Activated T-helper 2 cell treated with anti-CD3 and anti-CD28 coated beads, Interferon-gamma antibody, Interleukin-2, Interleukin-4, amounts not matched to agents 10 μg/mL and 5 μg/mL and 100 μg/mL, durations not matched to agents 14 hours and 24 hours and 36 hours (primary cell): ENCODE measurements at regions of chr2 and their contacts with region 1.

Region 1: GRCh38 chr2:54899576-54900200 is 150.6 kb downstream of the RTN4 start:
- DNase-seq: no peak
- H3K4me3 Mint-ChIP-seq: no peak overlapping the region
- H3K27ac Mint-ChIP-seq: no peak overlapping the region
- H3K4me1 Mint-ChIP-seq: peaks cover 18% of the 10 kb centered on the region
- H3K27me3 Mint-ChIP-seq: no peaks in the 10 kb centered on the region

Region 2: DNA sequence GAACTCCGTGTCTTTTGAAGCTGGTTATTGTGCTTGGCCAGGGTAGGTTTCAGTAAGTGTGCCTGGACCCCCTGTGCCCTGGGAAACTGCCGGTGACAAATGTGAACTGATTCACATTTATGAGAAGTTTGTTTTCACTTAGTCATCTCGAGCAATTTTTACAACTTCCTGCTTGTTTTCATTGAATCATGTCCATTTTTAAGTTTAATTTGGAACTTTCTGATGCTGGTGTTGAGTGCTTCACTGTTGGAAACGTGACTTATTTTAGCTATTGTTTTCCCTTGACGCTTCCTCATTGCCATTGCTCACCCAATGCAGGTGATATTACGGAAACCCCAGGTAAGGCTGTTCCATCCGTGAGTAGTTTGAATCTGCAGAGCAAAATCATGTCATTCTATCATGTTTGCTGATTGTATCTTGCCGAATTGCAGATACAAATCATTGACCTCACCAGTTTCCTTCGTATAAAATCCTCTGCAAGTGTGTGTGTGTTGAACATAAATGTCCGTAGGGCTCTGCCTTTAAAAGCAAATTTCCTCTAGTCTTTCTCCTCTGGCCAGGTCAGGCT is 53.4 kb after region 1 on chr2:
- intact Hi-C with region 1: loop called (anchors 5 kb)
- DNase-seq: no peak
- H3K4me3 Mint-ChIP-seq: no peak overlapping the region
- H3K27ac Mint-ChIP-seq: peak overlapping the region; percentile 54
- H3K4me1 Mint-ChIP-seq: peaks cover 17% of the 10 kb centered on the region
- H3K27me3 Mint-ChIP-seq: no peaks in the 10 kb centered on the region

Region 3: DNA sequence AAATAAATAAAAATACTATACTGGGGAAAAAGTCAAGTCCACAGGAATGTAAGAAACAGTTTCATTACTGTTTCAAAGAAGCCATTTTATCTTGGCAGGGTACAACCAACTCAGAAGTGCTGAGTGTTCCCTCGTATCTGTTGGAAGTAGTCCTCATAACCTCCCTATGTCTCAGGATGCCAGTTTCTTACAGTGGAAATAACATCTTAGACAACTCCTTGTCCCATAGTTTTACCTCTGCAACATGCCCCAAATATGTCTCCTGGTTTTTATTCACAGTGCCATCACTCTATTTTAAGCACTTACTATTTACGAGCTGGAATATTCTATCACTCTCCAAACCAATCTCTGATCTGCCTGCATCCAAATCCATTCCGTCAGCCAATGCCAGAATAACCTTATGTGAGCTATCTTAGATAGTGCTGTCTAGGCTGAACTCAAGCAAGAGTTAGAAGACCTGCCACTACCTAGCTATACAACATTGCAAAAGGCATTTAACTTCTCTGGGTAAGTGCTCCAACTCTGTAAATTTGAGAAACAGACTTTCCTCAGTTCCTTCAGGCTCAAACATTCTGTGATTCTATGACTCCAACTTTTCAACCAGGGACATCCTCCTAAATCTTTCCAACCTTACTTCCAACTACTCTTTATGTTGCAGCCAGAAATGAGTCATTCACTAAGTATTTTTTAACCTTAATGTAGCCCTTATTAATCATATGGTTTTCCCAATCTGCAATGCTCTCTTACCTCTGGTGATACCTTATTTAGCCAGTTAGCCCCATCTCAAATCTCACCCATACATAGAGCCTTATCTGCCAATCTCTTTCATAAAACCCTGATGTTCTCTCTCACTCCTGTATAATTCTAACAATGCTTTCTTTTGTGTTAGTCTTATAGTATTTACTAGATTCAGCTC is 83.9 kb after region 1 on chr2:
- intact Hi-C with region 1: no loop called
- DNase-seq: no peak
- H3K4me3 Mint-ChIP-seq: no peak overlapping the region
- H3K27ac Mint-ChIP-seq: no peak overlapping the region
- H3K4me1 Mint-ChIP-seq: peaks cover 25% of the 10 kb centered on the region
- H3K27me3 Mint-ChIP-seq: no peaks in the 10 kb centered on the region

Region 4: DNA sequence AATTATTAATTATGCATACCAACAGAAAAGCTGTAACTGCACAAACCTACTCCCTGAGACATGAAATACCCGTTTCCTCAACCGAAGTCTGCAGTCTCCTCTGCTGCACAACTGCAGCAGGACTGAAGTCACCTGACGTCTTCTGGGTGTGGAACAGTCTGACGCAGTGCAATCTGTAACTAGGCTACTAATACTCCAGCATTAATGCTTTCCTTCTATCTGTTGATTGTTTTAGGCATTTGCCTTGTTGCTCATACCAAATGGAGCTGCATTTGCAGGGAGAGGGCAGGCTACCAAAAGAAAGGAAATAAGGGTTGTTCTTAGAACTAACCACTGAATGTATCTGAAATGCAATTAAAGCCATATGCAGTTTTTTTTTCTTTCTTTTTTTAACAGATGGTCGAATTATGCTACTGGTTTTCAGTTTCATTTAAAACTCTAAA is 110.5 kb after region 1 on chr2:
- intact Hi-C with region 1: loop called (anchors 10 kb)
- DNase-seq: peak; percentile 40
- H3K4me3 Mint-ChIP-seq: peak overlapping the region; percentile 85
- H3K27ac Mint-ChIP-seq: peak overlapping the region; percentile 70
- H3K4me1 Mint-ChIP-seq: peaks cover 56% of the 10 kb centered on the region
- H3K27me3 Mint-ChIP-seq: no peaks in the 10 kb centered on the region

Region 5: GRCh38 chr2:55175254-55176025 is 275.8 kb after region 1 on chr2:
- intact Hi-C with region 1: loop called (anchors 2 kb)
- DNase-seq: no peak
- H3K4me3 Mint-ChIP-seq: no peak overlapping the region
- H3K27ac Mint-ChIP-seq: no peak overlapping the region
- H3K4me1 Mint-ChIP-seq: no peaks in the 10 kb centered on the region
- H3K27me3 Mint-ChIP-seq: peaks cover 2% of the 10 kb centered on the region